ENCODE measurements at regions of chr6 and their contacts with region 1.

Region 1: DNA sequence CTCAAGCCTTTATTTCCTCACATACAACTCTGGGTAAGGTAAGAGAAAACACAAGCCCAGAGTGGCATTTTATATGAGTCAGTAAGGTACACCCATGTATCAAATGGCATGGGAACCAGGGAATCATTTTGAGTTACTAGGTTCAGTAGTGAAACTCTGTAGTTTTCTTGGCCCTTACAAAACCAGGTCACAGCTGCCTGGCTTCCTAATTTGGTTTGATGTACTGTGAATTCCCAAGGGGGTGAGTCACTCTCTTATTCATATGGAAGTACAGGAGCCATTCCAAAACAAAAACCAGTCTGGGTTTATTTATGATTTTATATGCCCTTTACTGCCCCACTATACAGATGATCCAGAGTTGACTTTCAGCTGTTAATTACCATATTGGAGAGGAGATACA is 70.7 kb downstream of the PDE7B start:
- DNase-seq: no peak
- H3K4me3 Mint-ChIP-seq: peak overlapping the region; percentile 30
- H3K27ac Mint-ChIP-seq: peak overlapping the region; percentile 80
- H3K4me1 Mint-ChIP-seq: peaks cover 43% of the 10 kb centered on the region
- H3K27me3 Mint-ChIP-seq: no peaks in the 10 kb centered on the region

Region 2: GRCh38 chr6:135162678-135163439 is 759.3 kb before region 1 on chr6:
- intact Hi-C with region 1: no loop called
- DNase-seq: no peak
- H3K4me3 Mint-ChIP-seq: peak overlapping the region; percentile 31
- H3K27ac Mint-ChIP-seq: peak overlapping the region; percentile 98
- H3K4me1 Mint-ChIP-seq: peaks cover 66% of the 10 kb centered on the region
- H3K27me3 Mint-ChIP-seq: no peaks in the 10 kb centered on the region

Region 3: GRCh38 chr6:135693811-135694370 is 228.3 kb before region 1 on chr6:
- intact Hi-C with region 1: loop called (anchors 5 kb)
- DNase-seq: no peak
- H3K4me3 Mint-ChIP-seq: no peak overlapping the region
- H3K27ac Mint-ChIP-seq: no peak overlapping the region
- H3K4me1 Mint-ChIP-seq: peaks cover 36% of the 10 kb centered on the region
- H3K27me3 Mint-ChIP-seq: no peaks in the 10 kb centered on the region

Region 4: GRCh38 chr6:135703621-135704020 is 218.6 kb before region 1 on chr6:
- intact Hi-C with region 1: loop called (anchors 1 kb)
- DNase-seq: peak; percentile 15
- H3K4me3 Mint-ChIP-seq: peak overlapping the region; percentile 35
- H3K27ac Mint-ChIP-seq: peak overlapping the region; percentile 90
- H3K4me1 Mint-ChIP-seq: peaks cover 41% of the 10 kb centered on the region
- H3K27me3 Mint-ChIP-seq: peaks cover 5% of the 10 kb centered on the region

Region 5: GRCh38 chr6:135880066-135880972 is 41.9 kb before region 1 on chr6:
- intact Hi-C with region 1: loop called (anchors 5 kb)
- DNase-seq: peak; percentile 64
- H3K4me3 Mint-ChIP-seq: peak overlapping the region; percentile 82
- H3K27ac Mint-ChIP-seq: peak overlapping the region; percentile 98
- H3K4me1 Mint-ChIP-seq: peaks cover 66% of the 10 kb centered on the region
- H3K27me3 Mint-ChIP-seq: no peaks in the 10 kb centered on the region

Region 6: GRCh38 chr6:135909737-135910387 is 12.3 kb before region 1 on chr6:
- intact Hi-C with region 1: loop called (anchors 1 kb)
- DNase-seq: peak; percentile 51
- H3K4me3 Mint-ChIP-seq: no peak overlapping the region
- H3K27ac Mint-ChIP-seq: no peak overlapping the region
- H3K4me1 Mint-ChIP-seq: peaks cover 47% of the 10 kb centered on the region
- H3K27me3 Mint-ChIP-seq: no peaks in the 10 kb centered on the region

Region 7: GRCh38 chr6:136173519-136174507 is 251.6 kb after region 1 on chr6:
- intact Hi-C with region 1: loop called (anchors 5 kb)
- DNase-seq: peak; percentile 32
- H3K4me3 Mint-ChIP-seq: peak overlapping the region; percentile 13
- H3K27ac Mint-ChIP-seq: peak overlapping the region; percentile 85
- H3K4me1 Mint-ChIP-seq: peaks cover 20% of the 10 kb centered on the region
- H3K27me3 Mint-ChIP-seq: no peaks in the 10 kb centered on the region